ENCODE measurements at regions of chr11 and their contacts with region 1.

Region 1: DNA sequence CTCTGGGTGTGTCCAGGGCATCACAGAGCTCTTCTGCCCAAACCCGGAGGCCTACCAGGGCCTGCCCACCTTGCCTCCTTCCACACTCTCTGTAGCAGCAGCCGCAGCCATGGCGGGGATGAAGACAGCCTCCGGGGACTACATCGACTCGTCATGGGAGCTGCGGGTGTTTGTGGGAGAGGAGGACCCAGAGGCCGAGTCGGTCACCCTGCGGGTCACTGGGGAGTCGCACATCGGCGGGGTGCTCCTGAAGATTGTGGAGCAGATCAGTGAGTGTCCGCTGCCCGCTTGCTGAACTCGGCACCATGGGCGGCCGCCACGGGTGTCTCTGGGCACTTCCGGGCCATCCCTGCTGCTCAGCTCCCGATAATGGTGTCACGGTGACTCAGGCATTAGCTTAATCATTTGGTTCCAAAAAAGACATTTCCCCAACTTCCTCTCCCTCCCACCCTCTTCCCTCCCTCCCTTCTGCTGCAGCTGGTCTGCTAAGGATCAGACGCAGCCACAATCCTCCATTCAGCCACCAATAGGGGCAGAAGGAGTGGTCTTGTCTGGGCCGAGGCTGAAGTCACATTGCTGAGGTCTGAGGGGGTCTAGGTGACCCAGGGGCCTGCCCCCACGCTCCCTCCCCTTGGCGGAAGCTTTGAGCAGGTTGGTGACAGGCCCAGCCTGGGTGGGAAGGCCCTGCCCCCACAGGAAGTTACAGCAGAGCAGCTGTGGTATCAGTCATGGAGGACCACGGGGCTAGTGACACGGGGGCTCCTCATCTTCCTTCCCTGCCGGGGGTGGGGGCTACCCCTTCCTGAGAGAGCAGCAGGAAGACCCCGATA is 950 bp downstream of the FERMT3 start:
- DNase-seq: peak; percentile 89 to 92 (median 92)
- H3K4me3 ChIP-seq: peak overlapping the region; percentile 62 to 100 (median 98)
- H3K4me3 Mint-ChIP-seq: peak overlapping the region; percentile 98
- H3K27ac ChIP-seq: peak overlapping the region; percentile 98 to 99
- H3K27ac Mint-ChIP-seq: peak overlapping the region; percentile 97 to 99 (median 98)
- H3K4me1 ChIP-seq: peaks cover 43 to 55% of the 10 kb centered on the region in 2 donors
- H3K4me1 Mint-ChIP-seq: peaks cover 48% of the 10 kb centered on the region
- H3K27me3 ChIP-seq: no peaks in the 10 kb centered on the region
- H3K27me3 Mint-ChIP-seq: no peaks in the 10 kb centered on the region
- CTCF ChIP-seq: no peak

Region 2: GRCh38 chr11:64225612-64226506 is 18.4 kb after region 1 on chr11 and contains the starts of genes NUDT22 and TRPT1:
- intact Hi-C with region 1: loop called in 1 of 2 experiments (anchors 1 kb)
- DNase-seq: peak; percentile 80 to 86 (median 81)
- H3K4me3 ChIP-seq: peak within 1 kb of the TSS; percentile 65 to 97 (median 96)
- H3K4me3 Mint-ChIP-seq: peak within 1 kb of the TSS; percentile 81 to 89
- H3K27ac ChIP-seq: peak within 1 kb of the TSS; percentile 78 to 92
- H3K27ac Mint-ChIP-seq: peak within 1 kb of the TSS; percentile 77 to 95 (median 88)
- H3K4me1 ChIP-seq: peaks cover 40 to 58% of the 10 kb centered on the region in 2 donors
- H3K4me1 Mint-ChIP-seq: peaks cover 42% of the 10 kb centered on the region
- H3K27me3 ChIP-seq: no peaks in the 10 kb centered on the region
- H3K27me3 Mint-ChIP-seq: peaks cover 0 to 1% (median 0%) of the 10 kb centered on the region in 3 donors
- CTCF ChIP-seq: peak; percentile 31
- polyA plus RNA-seq, gene NUDT22: 47.9 to 86.1 (median 56.1) TPM
- polyA plus RNA-seq, gene TRPT1: 24.8 to 34.6 (median 31.6) TPM

Region 3: GRCh38 chr11:64240394-64241174 is 33.1 kb after region 1 on chr11 and contains the start of gene FKBP2:
- intact Hi-C with region 1: loop called (anchors 5 kb)
- DNase-seq: peak; percentile 98 to 99 (median 99)
- H3K4me3 ChIP-seq: peak within 1 kb of the TSS; percentile 54 to 84 (median 81)
- H3K4me3 Mint-ChIP-seq: peak within 1 kb of the TSS; percentile 87 to 92
- H3K27ac ChIP-seq: peak within 1 kb of the TSS; percentile 96 to 100
- H3K27ac Mint-ChIP-seq: peak within 1 kb of the TSS; percentile 100
- H3K4me1 ChIP-seq: peaks cover 61 to 75% of the 10 kb centered on the region in 2 donors
- H3K4me1 Mint-ChIP-seq: peaks cover 57% of the 10 kb centered on the region
- H3K27me3 ChIP-seq: no peaks in the 10 kb centered on the region
- H3K27me3 Mint-ChIP-seq: peaks cover 0 to 6% (median under 1%) of the 10 kb centered on the region in 3 donors
- CTCF ChIP-seq: no peak
- polyA plus RNA-seq, gene FKBP2: 38.9 to 80.7 (median 71.1) TPM

Measured in CD14-positive monocyte (primary cell).